ENCODE measurements at regions of chr10 and their contacts with region 1.

Region 1: DNA sequence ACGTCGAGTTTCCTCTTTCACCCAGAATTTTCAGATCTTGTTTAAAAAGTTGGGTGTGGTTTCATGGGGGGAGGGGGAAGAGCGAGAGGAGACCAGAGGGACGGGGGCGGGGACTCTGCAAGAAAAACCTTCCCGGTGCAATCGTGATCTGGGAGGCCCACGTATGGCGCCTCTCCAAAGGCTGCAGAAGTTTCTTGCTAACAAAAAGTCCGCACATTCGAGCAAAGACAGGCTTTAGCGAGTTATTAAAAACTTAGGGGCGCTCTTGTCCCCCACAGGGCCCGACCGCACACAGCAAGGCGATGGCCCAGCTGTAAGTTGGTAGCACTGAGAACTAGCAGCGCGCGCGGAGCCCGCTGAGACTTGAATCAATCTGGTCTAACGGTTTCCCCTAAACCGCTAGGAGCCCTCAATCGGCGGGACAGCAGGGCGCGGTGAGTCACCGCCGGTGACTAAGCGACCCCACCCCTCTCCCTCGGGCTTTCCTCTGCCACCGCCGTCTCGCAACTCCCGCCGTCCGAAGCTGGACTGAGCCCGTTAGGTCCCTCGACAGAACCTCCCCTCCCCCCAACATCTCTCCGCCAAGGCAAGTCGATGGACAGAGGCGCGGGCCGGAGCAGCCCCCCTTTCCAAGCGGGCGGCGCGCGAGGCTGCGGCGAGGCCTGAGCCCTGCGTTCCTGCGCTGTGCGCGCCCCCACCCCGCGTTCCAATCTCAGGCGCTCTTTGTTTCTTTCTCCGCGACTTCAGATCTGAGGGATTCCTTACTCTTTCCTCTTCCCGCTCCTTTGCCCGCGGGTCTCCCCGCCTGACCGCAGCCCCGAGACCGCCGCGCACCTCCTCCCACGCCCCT is at the start of gene VIM:
- DNase-seq: peak; percentile 64

Region 2: GRCh38 chr10:16964576-16965343 is 263.6 kb before region 1 on chr10:
- CTCF ChIA-PET with region 1: no interaction called
- POLR2A ChIA-PET with region 1: no interaction called
- DNase-seq: no peak

Region 3: DNA sequence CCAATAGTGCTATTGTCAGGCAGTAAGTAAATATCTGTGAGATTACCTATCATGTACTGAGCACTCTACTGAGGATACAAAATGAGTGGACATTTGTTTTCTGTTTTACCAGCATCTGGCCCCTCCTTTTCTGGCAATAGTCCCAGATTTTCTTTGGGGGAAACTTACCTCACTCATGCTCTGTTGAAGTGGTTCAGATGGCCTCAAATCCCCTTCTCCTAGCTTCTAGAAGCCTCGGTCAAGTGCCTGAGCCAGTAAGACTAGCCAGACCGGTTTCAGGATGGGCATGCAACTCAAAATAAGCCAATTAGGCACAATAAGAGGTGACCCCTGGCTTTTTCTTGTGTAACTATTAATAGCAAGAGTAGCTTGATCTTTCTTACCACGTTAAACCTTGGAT is 46.6 kb before region 1 on chr10:
- CTCF ChIA-PET with region 1: no interaction called
- POLR2A ChIA-PET with region 1: interaction called, 13 read pairs
- DNase-seq: no peak

Region 4: GRCh38 chr10:17206210-17206709 is 22.1 kb before region 1 on chr10:
- CTCF ChIA-PET with region 1: no interaction called
- POLR2A ChIA-PET with region 1: interaction called, 104 read pairs
- DNase-seq: no peak

Region 5: DNA sequence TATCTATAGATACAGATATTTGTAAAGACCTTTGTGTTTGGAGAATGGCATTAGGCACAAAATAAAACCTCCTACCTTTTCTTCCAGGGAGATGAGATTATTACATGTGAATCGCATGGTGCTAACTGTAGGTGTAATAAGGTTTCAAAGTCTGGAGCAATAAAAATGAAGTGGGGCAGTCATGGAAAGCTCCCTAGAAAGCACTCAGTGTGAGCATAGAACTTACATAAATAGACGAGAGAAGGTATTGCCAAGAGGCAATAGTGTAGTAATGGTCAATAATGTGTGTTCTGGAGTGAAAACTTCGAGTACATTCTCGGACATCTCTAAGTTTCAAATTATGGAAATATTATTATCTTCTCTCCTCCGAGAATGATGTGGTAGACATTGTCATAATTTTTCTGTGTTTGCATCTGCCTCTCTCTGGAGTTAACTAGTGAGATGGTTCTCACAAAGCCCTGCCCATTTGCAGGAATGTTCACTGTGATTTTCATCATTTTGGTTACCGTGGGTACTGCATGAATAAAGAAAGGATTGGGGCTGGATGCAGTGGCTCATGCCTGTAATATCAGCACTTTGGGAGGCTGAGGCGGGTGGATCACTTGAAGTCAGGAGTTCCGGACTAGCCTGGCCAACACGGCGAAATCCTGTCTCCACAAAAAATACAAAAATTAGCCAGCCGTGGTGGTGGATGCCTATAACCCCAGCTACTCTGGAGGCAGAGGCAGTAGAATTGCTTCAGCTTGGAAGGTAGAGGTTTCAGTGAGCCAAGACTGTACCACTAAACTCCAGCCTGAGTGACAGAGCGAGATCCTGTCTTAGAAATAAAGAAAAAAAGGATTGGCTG is 10.4 kb after region 1 on chr10:
- CTCF ChIA-PET with region 1: no interaction called
- POLR2A ChIA-PET with region 1: interaction called, 27 read pairs
- DNase-seq: no peak